ENCODE measurements at regions of chr10 and their contacts with region 1.

Region 1: DNA sequence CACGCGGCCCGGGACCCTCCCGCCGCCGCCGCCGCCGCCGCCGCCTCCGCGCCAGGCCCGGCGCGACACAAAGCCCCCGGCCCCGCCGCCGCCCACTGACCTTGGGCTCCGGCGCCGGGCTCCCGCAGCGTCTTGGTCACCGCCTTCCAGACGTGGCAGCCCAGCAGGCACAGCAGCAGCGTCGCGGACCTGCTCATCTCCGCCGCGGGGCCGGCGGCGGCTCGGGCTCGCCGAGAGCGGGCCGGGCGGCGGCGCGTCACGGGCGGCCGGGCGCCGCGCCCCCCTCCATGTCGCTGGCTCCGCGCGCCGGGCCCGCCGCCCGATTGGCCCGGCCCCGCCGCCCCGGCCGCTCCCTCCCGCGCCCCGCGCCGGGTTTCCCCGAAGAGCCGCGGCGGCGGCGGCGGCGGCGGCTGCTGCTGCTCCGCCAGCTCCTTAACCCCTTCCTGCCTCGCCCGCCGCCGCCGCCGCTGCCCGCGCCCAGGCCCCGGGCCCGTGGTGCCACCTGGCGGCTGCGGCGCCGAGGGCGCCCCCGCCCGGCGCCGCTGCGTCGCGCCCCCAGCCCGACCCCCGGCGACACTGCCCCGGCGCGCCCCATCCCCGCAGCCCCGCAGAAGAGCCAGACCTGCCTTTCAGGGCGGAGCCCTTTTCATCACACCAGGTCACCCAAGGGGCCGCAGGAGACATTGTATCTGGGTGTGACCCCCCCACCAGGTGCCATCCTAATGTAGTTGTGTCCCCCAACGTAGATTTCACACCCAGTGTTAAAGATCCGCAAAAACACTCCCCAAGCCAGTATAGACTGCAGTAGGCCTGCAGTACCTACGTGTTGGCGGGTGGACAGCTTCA is at the start of gene FAM171A1:
- DNase-seq: peak; percentile 68 to 76 (median 74)
- ATAC-seq: peak; percentile 76 to 89 (median 85)
- H3K4me3 ChIP-seq: peak within 1 kb of the TSS; percentile 53 to 62 (median 62)
- H3K27ac ChIP-seq: peak within 1 kb of the TSS; percentile 47 to 60 (median 55)
- H3K4me1 ChIP-seq: no peaks in the 10 kb centered on the region
- H3K27me3 ChIP-seq: no peaks in the 10 kb centered on the region
- CTCF ChIP-seq: peak in 3 of 4 donors; percentile 8 to 57 (median 28)
- POLR2A ChIP-seq: no peak
- total RNA-seq, gene FAM171A1: 6.1 to 12.1 (median 10.3) TPM

Region 2: GRCh38 chr10:15209827-15210509 is 161.1 kb before region 1 on chr10:
- intact Hi-C with region 1: loop called in 1 of 2 experiments (anchors 5 kb)
- DNase-seq: peak; percentile 76 to 84 (median 78)
- ATAC-seq: peak; percentile 90 to 96 (median 94)
- H3K4me3 ChIP-seq: no peak overlapping the region
- H3K27ac ChIP-seq: no peak overlapping the region
- H3K4me1 ChIP-seq: no peaks in the 10 kb centered on the region
- H3K27me3 ChIP-seq: no peaks in the 10 kb centered on the region
- CTCF ChIP-seq: peak; percentile 69 to 90 (median 87)
- POLR2A ChIP-seq: no peak

Region 3: DNA sequence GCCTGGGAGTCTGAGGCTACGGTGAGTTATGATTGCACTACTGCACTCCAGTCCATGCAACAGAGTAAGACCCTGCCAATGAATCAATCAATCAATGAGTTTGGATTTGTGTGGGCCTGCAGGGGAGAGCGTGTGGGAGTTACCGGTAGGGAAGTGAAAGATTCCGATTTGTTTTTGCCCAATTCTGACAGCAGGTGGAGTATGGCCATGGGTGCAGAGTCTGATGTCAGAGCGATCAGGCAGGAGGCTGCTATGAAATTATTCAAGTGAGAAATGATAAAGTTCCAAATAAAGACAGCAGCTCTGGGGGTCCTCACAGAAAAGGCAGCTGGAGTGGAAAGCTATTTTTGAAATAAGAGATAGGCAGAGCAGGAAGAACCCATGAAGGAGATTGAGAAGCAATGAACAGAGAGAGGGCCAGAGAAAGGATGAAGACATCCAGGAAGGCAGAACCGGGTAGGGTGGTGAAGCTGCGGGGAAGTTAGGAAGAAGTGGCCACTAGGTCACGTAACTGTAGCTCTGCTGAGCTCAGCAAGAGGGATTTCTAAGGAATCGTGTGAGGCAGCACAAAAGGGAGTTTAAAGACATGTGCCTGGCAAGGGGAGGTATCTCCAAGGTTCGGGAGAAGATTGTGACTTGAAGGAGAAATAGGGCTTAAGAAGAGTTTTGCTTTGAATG is 108.9 kb before region 1 on chr10:
- intact Hi-C with region 1: loop called (anchors 2 kb)
- DNase-seq: no peak
- ATAC-seq: peak; percentile 87 to 90 (median 89)
- H3K4me3 ChIP-seq: no peak overlapping the region
- H3K27ac ChIP-seq: no peak overlapping the region
- H3K4me1 ChIP-seq: no peaks in the 10 kb centered on the region
- H3K27me3 ChIP-seq: no peaks in the 10 kb centered on the region
- CTCF ChIP-seq: peak; percentile 45 to 61 (median 57)
- POLR2A ChIP-seq: no peak

Region 4: GRCh38 chr10:15293862-15294842 is 76.9 kb before region 1 on chr10:
- intact Hi-C with region 1: no loop called
- DNase-seq: no peak
- ATAC-seq: peak in 1 of 4 donors; percentile 22
- H3K4me3 ChIP-seq: no peak overlapping the region
- H3K27ac ChIP-seq: no peak overlapping the region
- H3K4me1 ChIP-seq: no peaks in the 10 kb centered on the region
- H3K27me3 ChIP-seq: no peaks in the 10 kb centered on the region
- CTCF ChIP-seq: no peak
- POLR2A ChIP-seq: no peak